ENCODE measurements at regions of chr3 and their contacts with region 1.

Region 1: DNA sequence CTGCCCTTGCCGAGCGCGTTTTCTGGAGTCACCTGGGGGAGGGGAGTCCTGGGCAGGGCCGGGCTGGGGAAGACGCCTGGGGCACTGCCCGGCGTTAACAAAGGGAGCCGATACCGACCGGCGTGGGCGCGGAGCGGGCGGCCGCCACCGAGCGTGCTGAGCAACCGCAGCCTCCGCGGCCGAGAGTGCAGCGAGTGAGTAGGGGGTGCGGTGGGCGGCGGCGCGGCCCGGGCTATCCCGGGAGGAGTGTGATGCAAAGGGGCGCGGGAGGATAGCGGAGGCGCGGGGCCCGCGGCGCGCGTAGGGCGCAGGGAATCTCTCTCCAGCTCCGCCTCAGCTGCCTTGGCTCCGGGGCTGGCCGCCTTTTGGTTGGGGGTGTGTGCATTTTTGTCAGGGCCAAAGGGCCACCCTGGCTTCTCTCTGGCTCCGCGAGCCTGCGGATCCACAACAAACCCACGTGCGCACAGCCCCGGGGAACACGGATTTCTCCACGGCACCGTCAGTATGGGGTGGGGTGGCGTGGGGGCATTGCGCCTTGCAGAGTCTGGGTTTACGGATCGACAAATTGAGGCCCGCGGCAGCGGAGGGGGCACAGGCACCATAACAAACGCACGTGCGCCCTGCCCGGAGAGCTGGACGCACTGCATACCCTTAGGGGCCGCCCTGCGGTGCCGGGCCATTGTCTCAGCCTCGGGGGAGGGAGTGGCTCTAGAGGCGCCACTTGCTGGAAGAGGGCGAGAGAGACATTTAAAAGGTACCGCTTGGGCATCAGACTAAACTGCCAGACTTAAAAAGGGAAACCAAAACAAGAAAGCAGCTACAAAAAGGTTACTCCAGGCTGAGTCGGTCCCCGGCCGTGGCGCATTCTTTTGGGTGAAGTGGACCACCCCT is 560 bp downstream of the ST6GAL1 start:
- DNase-seq: peak; percentile 88

Region 2: DNA sequence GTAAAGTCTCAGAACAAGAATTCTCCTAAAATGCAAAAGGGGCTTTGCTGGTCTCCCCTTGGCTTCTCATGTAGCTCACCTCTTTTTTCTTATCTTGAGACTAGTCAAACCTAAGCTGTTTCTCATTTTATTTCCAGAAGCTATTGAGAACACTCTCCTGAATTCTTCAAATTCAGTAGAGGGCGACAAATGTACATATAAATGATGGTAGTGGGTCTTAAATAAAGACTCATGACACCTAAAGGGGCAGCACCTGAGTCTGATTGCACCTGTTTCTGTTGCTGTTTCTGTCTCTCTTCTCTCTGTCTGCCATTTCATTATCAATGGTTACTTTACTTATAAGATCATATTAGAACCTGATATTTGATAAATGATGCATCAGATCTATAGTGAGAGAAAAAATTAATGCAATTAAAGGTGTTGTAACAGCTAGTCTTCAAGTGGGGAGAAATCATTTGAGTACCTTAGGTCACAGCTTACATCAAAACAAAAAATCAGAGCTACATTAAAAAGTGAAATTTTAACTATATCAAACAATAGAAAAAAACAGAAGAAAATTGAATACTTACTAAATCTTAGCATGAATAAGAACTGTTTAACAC is 81.4 kb before region 1 on chr3:
- intact Hi-C with region 1: loop called (anchors 2 kb)
- DNase-seq: no peak

Region 3: GRCh38 chr3:186901135-186901734 is 29.7 kb before region 1 on chr3:
- intact Hi-C with region 1: no loop called
- DNase-seq: no peak

Region 4: DNA sequence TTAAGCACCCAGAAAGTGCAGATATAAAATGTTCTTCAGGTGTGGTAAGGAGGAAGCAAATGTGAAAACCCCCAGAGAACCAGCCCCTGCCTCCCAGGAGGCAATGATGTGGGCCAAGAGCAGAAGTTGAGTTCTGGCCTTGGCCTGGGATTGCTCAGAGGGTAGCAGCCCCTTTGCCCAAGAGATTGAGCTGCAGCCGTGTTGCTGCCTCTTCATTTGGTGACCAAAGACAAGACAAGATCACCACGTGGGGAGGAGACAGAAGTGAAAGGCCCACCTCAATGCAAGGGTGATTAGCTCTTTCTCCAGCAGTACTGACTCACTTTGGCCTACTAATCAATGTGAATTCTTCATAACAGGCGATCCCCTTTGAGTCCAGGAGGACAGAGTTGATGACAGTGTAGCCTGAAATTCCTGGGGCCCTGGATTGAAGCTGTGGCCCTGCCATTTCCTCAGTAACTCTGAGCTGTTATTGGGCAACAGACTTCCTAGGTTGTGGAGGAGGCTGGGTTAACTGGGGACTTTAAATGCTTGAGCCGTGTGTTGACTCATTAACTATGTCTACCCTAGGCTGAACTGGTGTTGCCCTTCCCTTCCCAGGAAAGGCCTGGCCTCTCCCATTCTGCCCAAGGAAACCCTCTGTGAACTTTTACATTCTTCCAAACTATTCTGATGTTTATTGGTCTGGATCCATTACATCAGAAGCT is 85.9 kb after region 1 on chr3:
- intact Hi-C with region 1: no loop called
- DNase-seq: no peak

Region 5: DNA sequence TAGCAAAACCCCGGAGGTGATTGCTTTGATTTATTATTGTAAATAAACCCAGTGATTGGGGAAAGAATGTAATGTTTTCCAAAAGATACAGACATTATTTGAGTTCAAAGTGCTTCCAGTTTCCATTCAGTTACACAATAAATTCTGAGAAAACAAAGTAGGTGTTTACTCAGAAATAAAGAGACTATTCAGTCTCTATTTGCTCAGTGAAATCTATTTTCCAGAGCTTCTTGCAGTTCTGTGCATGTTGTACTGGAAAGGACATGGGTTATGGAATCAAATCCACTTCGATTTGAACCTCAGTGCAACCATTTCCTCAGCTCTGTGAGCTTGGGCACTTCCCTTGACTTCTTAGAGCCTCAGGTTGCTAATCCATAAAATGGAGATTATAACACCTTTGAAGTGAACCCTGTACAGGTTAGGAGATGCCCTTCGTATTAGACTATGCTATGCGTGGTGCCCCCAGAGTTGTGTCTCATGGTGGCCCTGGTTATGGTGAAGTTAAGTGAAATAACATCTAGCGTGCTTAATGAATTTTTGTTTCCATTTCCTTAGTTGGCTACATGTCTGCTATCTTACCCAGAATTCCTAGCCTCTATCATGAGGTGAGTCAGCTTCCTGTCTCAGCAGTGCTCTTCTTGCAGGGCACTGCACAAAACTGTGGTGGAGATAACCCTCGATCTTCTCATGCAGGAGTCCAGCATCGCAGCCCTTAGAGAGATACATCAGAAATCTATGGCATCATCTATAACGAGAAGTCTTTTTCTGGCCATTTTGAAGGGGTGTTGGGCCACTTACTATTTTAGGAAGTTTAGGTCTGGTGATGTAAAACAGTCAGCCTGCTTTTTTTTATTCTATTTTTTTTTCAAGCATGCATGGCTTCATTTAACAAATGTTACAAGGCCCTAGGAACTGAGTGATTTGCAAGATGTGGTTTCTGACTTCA is 110.7 kb after region 1 on chr3:
- intact Hi-C with region 1: loop called (anchors 5 kb)
- DNase-seq: no peak

Region 6: DNA sequence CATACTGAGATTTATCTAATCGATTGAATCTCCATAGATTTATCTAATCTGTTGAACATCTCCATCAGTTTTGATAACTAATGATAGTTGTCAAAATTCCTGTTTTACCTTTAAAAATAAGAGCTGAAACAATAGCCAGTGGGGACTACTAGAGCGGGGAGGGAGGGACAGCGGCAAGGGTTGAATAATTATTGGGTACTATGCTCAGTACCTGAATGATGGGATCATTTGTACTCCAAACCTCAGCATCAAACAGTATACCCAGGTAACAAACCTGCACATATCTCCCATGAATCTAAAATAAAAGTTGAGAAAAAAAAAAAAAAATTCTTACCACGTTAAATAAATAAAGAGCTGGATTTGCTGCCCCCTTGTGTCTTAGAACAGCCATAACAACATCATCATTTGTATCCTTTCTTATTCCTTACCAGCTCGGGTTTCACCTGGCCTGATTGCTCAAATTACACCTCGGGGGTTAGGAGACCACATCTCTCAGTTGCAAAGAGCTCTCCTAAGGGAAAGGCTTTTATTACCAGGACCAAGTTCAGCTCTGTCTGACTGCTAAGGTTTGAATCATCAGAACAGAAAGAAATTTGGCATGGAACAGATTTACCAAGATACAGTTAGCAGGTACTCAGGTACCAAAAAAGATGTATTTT is 234.1 kb after region 1 on chr3:
- intact Hi-C with region 1: loop called (anchors 5 kb)
- DNase-seq: no peak

Measured in cardiac septum (tissue), 1 donor.